ENCODE measurements at regions of chr15 and their contacts with region 1.

Region 1: DNA sequence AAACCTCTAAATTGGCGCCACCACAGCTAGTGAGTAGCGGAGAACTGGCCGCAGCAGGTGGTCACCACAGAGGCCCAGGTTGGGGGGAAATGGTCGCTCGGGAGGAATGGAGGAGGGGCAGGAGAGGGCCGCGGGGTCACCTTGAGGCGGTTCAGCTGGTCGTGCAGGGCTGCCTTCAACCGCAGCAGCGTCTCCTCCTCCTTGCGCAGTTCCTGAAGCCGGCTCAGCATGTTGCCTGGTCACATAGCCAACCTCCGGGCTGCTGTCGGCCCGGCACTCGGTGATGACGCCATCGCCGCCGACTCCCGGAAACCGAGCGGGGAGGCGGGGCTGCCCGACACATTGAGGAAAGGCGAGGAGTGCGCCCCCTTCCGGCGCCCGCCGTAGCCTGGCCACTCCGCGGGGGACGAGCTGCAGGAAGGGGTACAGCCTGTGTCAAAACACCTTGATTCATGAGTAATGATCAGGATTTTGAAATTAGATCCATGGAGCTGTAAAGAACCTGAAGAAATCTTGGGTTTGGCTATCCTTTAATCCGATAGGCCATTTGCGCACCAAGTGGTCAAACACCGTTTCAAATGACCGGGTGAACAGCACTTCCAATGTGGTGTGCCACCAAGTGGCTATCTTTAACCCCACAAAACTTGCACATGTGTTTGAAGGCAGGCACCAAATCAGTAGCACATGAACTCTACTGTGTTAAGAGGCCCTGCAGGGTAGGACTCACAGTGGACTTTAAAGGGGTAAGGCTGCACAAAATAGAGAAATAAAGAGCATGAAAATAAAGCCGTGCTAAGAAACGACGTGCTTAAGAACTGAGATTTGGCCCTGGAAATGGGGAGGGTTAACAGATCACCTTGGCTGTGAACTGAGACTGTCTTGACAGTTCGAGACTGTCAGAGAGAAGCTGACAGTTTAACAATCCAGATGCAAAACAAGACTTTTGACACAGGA is at the start of gene SNAPC5:
- DNase-seq: peak; percentile 94 to 99 (median 97)
- ATAC-seq: peak; percentile 90 to 93 (median 92)
- H3K4me3 ChIP-seq: peak within 1 kb of the TSS; percentile 82 to 94
- H3K4me3 Mint-ChIP-seq: peak within 1 kb of the TSS; percentile 93 to 97 (median 96)
- H3K27ac ChIP-seq: peak within 1 kb of the TSS; percentile 89
- H3K27ac Mint-ChIP-seq: peak within 1 kb of the TSS; percentile 94 to 97
- H3K4me1 ChIP-seq: peaks cover 13 to 33% of the 10 kb centered on the region in 2 experiments
- H3K4me1 Mint-ChIP-seq: peaks cover 62 to 66% (median 62%) of the 10 kb centered on the region in 3 donors
- H3K27me3 ChIP-seq: no peaks in the 10 kb centered on the region
- H3K27me3 Mint-ChIP-seq: no peaks in the 10 kb centered on the region
- total RNA-seq, gene SNAPC5: 23.4 to 37.5 (median 34.0) TPM

Region 2: DNA sequence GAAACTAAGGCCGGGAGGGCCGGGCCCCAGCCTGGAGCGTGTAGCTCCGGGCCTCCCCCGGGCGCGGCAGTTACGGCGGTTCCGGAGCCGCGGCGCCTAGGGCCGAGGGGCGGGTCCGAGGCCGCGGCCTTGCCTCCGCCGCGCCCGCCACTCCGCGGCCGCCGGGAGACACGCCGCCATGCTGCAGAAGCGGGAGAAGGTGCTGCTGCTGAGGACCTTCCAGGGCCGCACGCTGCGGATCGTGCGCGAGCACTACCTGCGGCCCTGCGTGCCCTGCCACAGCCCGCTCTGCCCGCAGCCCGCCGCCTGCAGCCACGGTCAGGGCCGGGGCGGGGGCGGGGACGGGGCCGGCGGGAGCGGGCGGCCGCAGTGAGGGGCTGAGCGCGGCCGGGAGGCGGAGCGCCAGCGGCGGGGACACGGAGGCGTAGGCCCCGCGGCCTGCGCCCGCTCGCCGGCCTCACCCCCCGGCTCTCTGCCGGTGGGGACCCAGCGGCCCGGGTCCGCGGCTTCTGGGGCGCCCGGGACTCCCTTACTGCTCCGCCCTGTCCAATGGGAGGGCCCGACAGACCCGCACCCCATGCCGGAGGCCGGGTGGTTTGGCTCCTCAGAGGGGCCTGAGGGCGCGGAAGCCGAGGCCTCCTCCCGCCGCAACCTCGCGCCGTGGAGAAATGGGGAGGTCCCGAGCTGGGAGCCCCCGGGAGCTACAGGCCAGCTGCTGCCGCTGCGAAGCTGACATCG is 204.2 kb before region 1 on chr15 and contains the start of gene DIS3L:
- CTCF ChIA-PET with region 1: interaction called in 1 of 2 experiments, 13 read pairs
- POLR2A ChIA-PET with region 1: no interaction called
- DNase-seq: peak; percentile 27 to 80 (median 54)
- ATAC-seq: peak; percentile 81 to 84 (median 82)
- H3K4me3 ChIP-seq: peak within 1 kb of the TSS; percentile 68 to 85
- H3K4me3 Mint-ChIP-seq: peak within 1 kb of the TSS; percentile 82 to 91 (median 88)
- H3K27ac ChIP-seq: peak within 1 kb of the TSS; percentile 91
- H3K27ac Mint-ChIP-seq: peak within 1 kb of the TSS; percentile 92 to 96
- H3K4me1 ChIP-seq: peaks cover 18 to 33% of the 10 kb centered on the region in 2 experiments
- H3K4me1 Mint-ChIP-seq: peaks cover 37 to 53% (median 53%) of the 10 kb centered on the region in 3 donors
- H3K27me3 ChIP-seq: no peaks in the 10 kb centered on the region
- H3K27me3 Mint-ChIP-seq: no peaks in the 10 kb centered on the region
- total RNA-seq, gene DIS3L: 29.9 to 36.9 (median 30.2) TPM

Region 3: GRCh38 chr15:66356345-66357236 is 141.2 kb before region 1 on chr15 and contains the start of gene TIPIN:
- CTCF ChIA-PET with region 1: interaction called in 1 of 2 experiments, 16 read pairs
- POLR2A ChIA-PET with region 1: interaction called in 1 of 2 experiments, 7 read pairs
- DNase-seq: peak; percentile 89 to 98 (median 95)
- ATAC-seq: peak; percentile 97 to 99 (median 99)
- H3K4me3 ChIP-seq: peak within 1 kb of the TSS; percentile 84 to 91
- H3K4me3 Mint-ChIP-seq: peak within 1 kb of the TSS; percentile 94 to 97 (median 95)
- H3K27ac ChIP-seq: peak within 1 kb of the TSS; percentile 57
- H3K27ac Mint-ChIP-seq: peak within 1 kb of the TSS; percentile 92 to 94
- H3K4me1 ChIP-seq: peaks cover 4 to 15% of the 10 kb centered on the region in 2 experiments
- H3K4me1 Mint-ChIP-seq: peaks cover 16 to 27% (median 22%) of the 10 kb centered on the region in 3 donors
- H3K27me3 ChIP-seq: no peaks in the 10 kb centered on the region
- H3K27me3 Mint-ChIP-seq: no peaks in the 10 kb centered on the region
- total RNA-seq, gene TIPIN: 3.6 to 8.4 (median 6.6) TPM

Region 4: DNA sequence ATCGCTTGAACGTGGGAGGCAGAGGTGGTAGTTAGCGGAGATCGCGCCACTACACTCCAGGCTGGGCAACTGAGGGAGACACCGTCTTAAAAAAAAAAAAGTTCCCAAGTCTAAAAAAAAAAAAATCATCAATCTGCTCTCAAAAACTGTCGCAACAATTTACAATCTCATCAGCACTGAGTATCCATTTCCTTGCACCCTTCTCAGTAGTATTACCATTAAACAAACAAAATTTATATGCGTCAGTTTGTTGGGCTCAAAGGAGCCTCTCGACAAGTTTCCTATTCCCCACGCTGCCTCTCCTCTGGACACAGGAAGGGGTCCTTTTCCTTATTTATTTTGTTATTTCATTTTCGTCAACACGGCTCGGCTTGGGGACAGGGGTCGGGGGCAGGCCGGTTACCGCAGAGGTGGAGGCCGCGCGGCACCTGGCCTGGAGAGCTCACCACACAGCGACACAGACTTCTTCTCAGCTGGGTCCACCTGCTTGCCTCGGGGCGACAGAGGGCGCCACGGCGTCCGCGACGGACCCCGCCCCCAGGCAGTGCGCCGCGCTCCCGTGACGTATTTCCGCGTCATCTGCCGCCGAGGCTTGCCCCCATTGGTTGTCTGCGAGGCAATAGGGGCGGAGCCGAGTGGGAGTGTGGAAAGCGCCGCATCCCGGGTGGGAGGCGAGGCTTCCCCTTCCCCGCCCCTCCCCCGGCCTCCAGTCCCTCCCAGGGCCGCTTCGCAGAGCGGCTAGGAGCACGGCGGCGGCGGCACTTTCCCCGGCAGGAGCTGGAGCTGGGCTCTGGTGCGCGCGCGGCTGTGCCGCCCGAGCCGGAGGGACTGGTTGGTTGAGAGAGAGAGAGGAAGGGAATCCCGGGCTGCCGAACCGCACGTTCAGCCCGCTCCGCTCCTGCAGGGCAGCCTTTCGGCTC is 111.3 kb before region 1 on chr15 and contains the start of gene MAP2K1:
- CTCF ChIA-PET with region 1: interaction called in 1 of 2 experiments, 40 read pairs
- POLR2A ChIA-PET with region 1: interaction called, 3 read pairs
- DNase-seq: peak; percentile 95 to 100 (median 98)
- ATAC-seq: peak; percentile 83 to 88 (median 87)
- H3K4me3 ChIP-seq: peak within 1 kb of the TSS; percentile 88 to 91
- H3K4me3 Mint-ChIP-seq: peak within 1 kb of the TSS; percentile 92 to 99 (median 99)
- H3K27ac ChIP-seq: peak within 1 kb of the TSS; percentile 78
- H3K27ac Mint-ChIP-seq: peak within 1 kb of the TSS; percentile 99 to 100
- H3K4me1 ChIP-seq: peaks cover 28 to 47% of the 10 kb centered on the region in 2 experiments
- H3K4me1 Mint-ChIP-seq: peaks cover 51 to 58% (median 57%) of the 10 kb centered on the region in 3 donors
- H3K27me3 ChIP-seq: no peaks in the 10 kb centered on the region
- H3K27me3 Mint-ChIP-seq: no peaks in the 10 kb centered on the region
- total RNA-seq, gene MAP2K1: 38.7 to 62.8 (median 49.4) TPM